Dendritic cell treated with granulocyte-macrophage colony-stimulating factor and Interleukin-4, amounts not matched to agents 40 ng/mL and 50 ng/mL, for 4 days (primary cell): ENCODE measurements at regions of chr14 and their contacts with region 1.

Region 1: GRCh38 chr14:68418174-68419118 is 374.4 kb downstream of the ZFP36L1 start:
- H3K4me3 Mint-ChIP-seq: no peak overlapping the region
- H3K27ac Mint-ChIP-seq: peak overlapping the region; percentile 15
- H3K4me1 Mint-ChIP-seq: peaks cover 13% of the 10 kb centered on the region
- H3K27me3 Mint-ChIP-seq: no peaks in the 10 kb centered on the region

Region 2: GRCh38 chr14:68333262-68333661 is 85.2 kb before region 1 on chr14:
- intact Hi-C with region 1: no loop called
- H3K4me3 Mint-ChIP-seq: no peak overlapping the region
- H3K27ac Mint-ChIP-seq: no peak overlapping the region
- H3K4me1 Mint-ChIP-seq: peaks cover 42% of the 10 kb centered on the region
- H3K27me3 Mint-ChIP-seq: no peaks in the 10 kb centered on the region

Region 3: DNA sequence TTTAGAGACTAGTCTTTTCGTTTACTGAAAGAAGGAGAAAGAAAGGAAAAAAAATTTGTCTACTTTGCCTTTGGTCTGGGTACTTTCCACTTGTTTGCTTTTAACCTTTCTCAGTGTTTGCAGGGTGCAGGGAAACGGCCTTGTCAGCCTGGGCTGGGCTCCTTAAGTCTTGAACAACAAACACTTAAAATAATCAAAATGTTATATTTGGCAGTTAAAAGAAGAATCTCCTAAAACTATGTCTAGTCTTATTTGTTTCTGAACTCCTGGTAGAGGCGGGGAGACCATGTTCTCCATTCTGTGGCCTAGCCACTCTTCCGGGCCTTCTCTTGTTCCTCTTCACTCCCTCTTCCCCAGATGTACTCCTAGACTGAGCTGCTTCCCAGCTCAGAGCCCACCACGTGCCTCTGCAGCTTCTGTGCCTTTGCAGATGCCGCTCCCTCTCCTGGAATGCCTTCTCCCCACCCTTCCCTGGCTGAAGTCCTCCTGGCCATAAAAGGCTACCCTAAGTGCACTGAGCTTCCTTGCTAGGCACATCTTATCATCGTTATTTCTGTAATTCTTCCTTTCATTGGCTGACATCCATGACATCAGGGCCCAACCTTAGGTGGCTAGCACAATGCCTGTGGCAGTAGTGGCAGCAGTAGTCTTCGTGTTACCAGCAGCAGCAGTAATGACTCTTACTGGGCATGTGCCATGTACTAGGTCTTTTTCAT is 58.5 kb before region 1 on chr14:
- intact Hi-C with region 1: no loop called
- H3K4me3 Mint-ChIP-seq: no peak overlapping the region
- H3K27ac Mint-ChIP-seq: peak overlapping the region; percentile 89
- H3K4me1 Mint-ChIP-seq: peaks cover 46% of the 10 kb centered on the region
- H3K27me3 Mint-ChIP-seq: no peaks in the 10 kb centered on the region

Region 4: GRCh38 chr14:68440820-68441219 is 22.4 kb after region 1 on chr14:
- intact Hi-C with region 1: loop called (anchors 2 kb)
- H3K4me3 Mint-ChIP-seq: no peak overlapping the region
- H3K27ac Mint-ChIP-seq: no peak overlapping the region
- H3K4me1 Mint-ChIP-seq: peaks cover 23% of the 10 kb centered on the region
- H3K27me3 Mint-ChIP-seq: no peaks in the 10 kb centered on the region

Region 5: DNA sequence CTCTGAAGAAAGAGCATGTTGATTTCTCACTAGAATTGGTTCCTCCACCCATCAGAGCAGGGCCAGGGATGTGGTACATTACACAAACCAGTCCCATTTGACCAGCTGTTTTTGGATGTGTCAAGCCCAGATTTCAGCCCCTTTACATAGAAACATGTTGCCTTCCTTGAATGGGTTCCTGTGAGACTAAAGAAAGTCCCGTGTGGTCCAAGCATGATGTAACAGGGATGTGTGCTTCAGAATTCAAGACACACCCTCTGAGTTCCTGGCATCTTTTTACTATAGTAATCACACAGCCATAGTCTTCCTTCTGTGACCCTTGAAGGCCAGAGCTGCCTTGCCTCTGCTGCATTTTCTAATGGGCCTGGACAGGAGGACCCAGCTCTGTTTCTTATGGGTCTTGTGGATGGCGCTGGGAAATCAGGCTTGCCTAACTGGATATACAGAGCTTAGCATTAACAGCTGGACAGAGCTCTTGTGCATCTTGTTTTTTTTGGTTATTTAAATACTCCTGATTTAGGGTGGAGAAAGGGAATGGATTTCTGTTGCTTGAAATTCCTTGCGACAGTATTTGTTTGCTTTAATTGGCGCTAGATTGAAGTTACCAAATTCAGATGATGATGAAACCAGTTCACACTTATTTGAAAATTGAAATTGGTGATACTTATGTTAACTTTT is 33.4 kb after region 1 on chr14:
- intact Hi-C with region 1: loop called (anchors 5 kb)
- H3K4me3 Mint-ChIP-seq: no peak overlapping the region
- H3K27ac Mint-ChIP-seq: no peak overlapping the region
- H3K4me1 Mint-ChIP-seq: peaks cover 6% of the 10 kb centered on the region
- H3K27me3 Mint-ChIP-seq: no peaks in the 10 kb centered on the region